ENCODE measurements at regions of chr1 and their contacts with region 1.

Region 1: DNA sequence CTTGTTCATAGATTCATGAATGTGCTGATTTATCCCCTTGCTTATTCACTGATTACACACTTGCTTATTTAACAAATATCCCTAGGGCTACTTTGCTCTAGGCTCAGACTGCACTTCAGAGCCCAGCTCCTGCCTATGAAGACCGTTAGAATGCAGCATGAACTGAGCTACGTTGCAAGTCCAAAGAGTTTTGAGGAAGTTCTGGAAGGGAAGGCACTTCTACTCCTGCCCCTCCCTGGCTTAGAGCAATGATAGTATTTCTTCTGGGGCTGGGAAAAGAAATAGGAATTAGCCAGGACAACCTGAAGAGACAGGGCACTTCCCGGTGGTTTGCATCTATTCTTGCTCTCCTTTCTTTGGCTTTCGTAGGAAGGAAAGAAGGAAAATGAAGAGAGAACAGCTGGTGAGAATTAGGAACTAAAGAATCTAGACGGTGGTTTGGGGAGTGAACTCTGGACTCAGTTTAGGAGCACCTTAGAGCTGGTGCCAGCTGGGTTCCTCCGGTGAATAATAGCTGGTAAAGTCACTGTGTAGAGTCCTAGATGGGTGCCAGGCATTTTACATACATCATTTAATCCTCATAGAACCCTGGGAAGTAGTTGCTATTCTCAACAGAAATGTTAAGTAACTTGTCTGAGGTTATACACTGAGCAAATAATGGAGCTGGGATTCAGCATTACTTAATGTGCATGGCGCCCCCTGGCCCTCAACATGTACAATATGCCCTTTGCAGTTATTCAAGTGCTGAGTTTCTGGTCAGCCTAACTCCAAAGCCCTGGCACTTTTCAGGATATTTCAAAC is 65.9 kb downstream of the NDUFS5 start:
- DNase-seq: peak; percentile 54
- H3K4me3 ChIP-seq: no peak overlapping the region
- H3K27ac ChIP-seq: no peak overlapping the region
- H3K4me1 ChIP-seq: peaks cover 14% of the 10 kb centered on the region
- H3K27me3 ChIP-seq: no peaks in the 10 kb centered on the region
- CTCF ChIP-seq: peak; percentile 79 to 82

Region 2: GRCh38 chr1:38859561-38860453 is 232.2 kb before region 1 on chr1 and contains the start of gene RRAGC:
- CTCF ChIA-PET with region 1: no interaction called
- dilution Hi-C with region 1: no loop called
- in situ Hi-C with region 1: no loop called
- intact Hi-C with region 1: loop called (anchors 1 kb)
- DNase-seq: peak; percentile 98
- H3K4me3 ChIP-seq: peak within 1 kb of the TSS; percentile 84 to 89 (median 87)
- H3K27ac ChIP-seq: peak within 1 kb of the TSS; percentile 89
- H3K4me1 ChIP-seq: peaks cover 12% of the 10 kb centered on the region
- H3K27me3 ChIP-seq: no peaks in the 10 kb centered on the region
- CTCF ChIP-seq: no peak
- total RNA-seq, gene RRAGC: 21.8 to 36.9 TPM